ENCODE measurements at regions of chr18 and their contacts with region 1.

Region 1: DNA sequence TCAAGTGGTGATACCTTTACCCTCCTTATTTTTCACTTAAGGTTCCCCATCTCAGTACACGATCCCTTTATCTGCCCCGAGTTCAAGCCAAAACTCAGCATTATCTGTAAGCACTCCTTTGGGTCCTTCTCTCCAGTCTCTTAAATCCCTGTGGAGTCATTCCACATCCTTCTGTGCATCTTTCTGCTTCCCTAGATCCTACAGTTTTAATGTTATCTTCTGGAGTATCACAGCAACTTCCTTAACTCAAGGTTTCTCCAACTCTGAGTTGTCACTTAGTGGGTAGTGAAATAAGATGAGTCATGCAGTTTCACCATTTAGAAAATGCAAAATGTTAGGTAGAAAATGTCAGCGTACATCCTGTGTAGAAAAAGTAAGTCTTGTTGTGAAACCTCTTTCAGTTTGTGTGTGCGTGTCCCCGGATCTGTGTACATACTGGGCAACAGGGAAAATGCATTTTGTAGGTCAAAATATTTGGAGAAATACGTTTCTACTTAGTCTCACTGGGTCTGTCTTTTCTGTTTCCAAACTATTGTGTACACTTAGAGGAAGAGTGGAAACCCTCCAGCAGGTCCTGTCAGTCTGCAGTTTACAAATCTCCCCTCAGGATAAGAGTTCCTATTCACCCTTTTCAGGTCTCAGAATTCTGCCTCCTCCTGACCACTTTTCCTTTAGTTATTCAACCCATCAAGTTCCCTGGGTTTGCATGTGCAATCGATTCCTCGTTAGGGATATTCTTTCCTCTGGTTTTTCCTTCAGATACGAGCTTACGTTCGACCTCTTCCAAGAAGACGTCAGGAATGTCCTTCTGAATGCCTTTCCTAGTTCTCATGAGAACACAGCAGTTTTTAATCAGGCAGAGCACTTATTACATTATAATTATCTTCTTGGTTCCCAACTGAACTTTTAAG is 154.8 kb downstream of the TGIF1 start:
- DNase-seq: peak; percentile 63
- H3K4me3 ChIP-seq: peak overlapping the region; percentile 6 to 45 (median 40)
- H3K27ac ChIP-seq: peak overlapping the region; percentile 84 to 88 (median 86)
- H3K4me1 ChIP-seq: peaks cover 0 to 40% (median 29%) of the 10 kb centered on the region in 4 donors
- H3K27me3 ChIP-seq: no peaks in the 10 kb centered on the region
- CTCF ChIP-seq: no peak
- EP300 ChIP-seq: peak in 2 of 4 donors; percentile 31 to 33
- POLR2A ChIP-seq: no peak

Region 2: DNA sequence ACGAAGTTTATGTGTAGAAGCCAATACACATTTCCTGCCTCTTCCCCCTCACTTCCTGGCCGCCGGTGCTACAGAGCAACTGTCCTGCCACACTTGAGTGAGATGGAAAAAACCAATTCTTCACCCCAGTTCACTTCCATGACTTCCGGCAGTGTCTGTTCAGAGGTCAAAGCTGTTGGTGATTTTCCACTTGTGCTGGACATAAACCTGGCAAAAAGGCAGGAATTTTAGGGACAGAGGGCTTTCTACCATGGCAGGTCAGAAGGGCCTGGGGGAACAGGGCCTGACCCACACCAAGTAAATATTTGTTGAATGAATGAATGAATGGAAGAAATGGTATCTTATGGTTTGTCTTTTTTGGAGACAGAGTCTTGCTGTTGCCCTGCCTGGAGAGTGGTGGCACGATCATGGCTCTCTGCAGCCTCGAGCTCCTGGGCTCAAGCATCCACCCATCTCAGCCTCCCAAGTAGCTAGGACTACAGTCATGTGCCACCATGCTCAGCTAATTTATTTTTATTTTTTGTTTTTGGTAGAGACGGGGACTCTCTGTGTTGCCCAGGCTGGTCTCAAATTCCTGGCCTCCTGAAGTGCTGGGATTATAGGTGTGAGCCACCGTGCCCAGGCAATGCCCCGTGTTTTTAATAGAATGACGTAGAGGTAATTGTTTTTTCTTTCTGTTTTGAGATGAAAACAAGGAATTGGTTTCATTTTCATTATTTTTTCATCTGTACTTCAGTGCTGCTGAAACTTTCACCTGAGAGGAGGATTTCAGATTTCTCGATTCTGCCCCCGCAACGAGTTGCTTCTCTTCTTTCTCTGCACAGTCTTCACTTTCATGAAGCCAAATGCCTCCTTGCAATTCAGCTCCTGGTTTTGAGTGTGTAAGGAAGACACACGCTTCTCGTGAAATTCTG is 543.8 kb before region 1 on chr18:
- intact Hi-C with region 1: no loop called
- DNase-seq: no peak
- H3K4me3 ChIP-seq: no peak overlapping the region
- H3K27ac ChIP-seq: peak overlapping the region in 2 of 4 donors; percentile 14 to 43
- H3K4me1 ChIP-seq: peaks cover 0 to 18% (median 10%) of the 10 kb centered on the region in 4 donors
- H3K27me3 ChIP-seq: no peaks in the 10 kb centered on the region
- CTCF ChIP-seq: no peak
- EP300 ChIP-seq: no peak
- POLR2A ChIP-seq: no peak

Region 3: DNA sequence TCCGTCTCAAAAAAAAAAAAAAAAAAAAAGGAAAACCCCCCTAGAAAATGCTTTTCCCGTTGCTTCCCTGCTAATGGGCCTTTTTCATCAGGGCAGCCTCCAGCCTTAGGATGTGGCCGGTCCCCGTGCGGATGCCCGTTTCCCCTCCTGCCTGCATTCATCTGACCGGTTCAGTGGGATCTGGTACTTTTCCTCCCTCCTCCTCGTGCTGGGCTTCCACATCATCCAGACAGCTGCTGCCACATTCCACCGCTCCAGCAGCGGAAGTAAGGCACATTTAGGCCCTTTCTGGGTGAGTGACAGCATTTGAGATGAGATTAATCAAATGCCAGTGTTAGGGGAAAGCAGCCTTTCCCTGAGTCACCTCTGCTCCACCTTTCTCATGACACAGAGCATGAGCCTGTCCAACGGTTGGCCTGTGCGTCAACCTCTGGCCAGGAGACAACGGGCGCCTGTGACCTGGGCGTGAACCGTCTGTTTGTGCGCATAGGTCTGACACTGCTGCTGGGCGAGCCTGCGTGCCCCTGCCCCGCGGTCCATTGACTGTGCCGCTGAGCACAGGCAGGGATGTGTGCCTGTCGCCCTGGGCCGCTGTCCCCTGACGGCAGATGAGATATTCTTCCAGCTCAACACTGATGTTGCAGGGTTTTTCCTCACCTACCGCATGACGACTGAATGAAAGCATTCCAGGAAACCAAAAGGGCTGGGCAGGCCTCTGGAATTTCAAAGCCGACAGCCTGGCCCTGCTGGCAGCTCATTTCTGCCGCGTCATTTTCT is 19.2 kb after region 1 on chr18:
- intact Hi-C with region 1: loop called (anchors 2 kb)
- DNase-seq: peak; percentile 86
- H3K4me3 ChIP-seq: no peak overlapping the region
- H3K27ac ChIP-seq: peak overlapping the region; percentile 72 to 88 (median 84)
- H3K4me1 ChIP-seq: peaks cover 0 to 40% (median 33%) of the 10 kb centered on the region in 4 donors
- H3K27me3 ChIP-seq: no peaks in the 10 kb centered on the region
- CTCF ChIP-seq: no peak
- EP300 ChIP-seq: peak in 2 of 4 donors; percentile 3 to 21
- POLR2A ChIP-seq: peak in 1 of 2 donors; percentile 34

Region 4: DNA sequence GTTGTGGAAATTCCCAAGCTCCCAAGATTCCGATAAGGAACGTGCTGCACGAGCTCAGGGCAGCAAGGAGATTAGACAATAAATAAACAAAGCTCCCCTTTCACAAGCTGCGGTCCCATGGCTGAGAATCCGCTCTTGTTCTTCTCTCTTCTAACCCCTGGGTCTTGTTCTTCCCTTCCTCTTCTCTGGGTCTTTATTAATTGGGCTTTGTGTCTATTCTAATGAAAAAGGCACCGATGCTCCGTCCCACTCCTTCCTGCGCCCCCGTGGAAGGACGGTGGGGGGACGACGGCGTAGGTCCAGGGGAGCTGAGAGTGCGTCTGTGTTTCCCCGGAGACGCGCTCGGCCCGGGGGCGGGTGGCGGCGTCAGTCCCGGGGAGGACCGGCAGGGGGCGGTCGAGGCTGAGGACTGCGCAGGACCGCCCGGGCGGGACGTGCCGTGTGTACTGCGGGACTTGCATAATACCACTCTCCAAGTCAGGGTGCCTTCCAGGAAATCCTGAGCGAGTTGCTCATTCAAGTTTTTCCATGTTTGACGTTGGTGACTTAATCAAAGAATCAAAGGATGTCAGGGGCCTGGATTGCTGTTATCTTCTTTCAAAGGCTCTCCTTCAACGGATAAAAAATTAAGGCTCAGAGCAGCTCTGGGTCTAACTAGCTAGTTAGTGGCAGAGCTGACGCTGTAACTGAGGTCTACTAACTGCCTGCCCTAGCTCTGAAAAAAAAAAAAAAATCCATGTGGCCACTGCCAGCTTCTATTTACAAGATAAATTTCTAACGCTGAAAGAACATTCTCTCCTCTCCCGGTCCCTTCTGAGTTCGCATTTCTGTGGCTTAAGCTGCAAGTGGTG is 166.6 kb after region 1 on chr18:
- intact Hi-C with region 1: no loop called
- DNase-seq: peak; percentile 92
- H3K4me3 ChIP-seq: peak overlapping the region; percentile 18 to 39 (median 32)
- H3K27ac ChIP-seq: peak overlapping the region; percentile 48 to 71 (median 60)
- H3K4me1 ChIP-seq: peaks cover 0 to 13% (median 7%) of the 10 kb centered on the region in 4 donors
- H3K27me3 ChIP-seq: no peaks in the 10 kb centered on the region
- CTCF ChIP-seq: peak; percentile 89 to 96 (median 94)
- EP300 ChIP-seq: no peak
- POLR2A ChIP-seq: no peak

Region 5: GRCh38 chr18:3947383-3947782 is 342.6 kb after region 1 on chr18:
- intact Hi-C with region 1: no loop called
- DNase-seq: no peak
- H3K4me3 ChIP-seq: no peak overlapping the region
- H3K27ac ChIP-seq: no peak overlapping the region
- H3K4me1 ChIP-seq: no peaks in the 10 kb centered on the region
- H3K27me3 ChIP-seq: no peaks in the 10 kb centered on the region
- CTCF ChIP-seq: no peak
- EP300 ChIP-seq: no peak
- POLR2A ChIP-seq: no peak